Activated naive CD4-positive, alpha-beta T cell treated with anti-CD3 and anti-CD28 coated beads for 36 hours (primary cell): ENCODE measurements at regions of chr6 and their contacts with region 1.

Region 1: DNA sequence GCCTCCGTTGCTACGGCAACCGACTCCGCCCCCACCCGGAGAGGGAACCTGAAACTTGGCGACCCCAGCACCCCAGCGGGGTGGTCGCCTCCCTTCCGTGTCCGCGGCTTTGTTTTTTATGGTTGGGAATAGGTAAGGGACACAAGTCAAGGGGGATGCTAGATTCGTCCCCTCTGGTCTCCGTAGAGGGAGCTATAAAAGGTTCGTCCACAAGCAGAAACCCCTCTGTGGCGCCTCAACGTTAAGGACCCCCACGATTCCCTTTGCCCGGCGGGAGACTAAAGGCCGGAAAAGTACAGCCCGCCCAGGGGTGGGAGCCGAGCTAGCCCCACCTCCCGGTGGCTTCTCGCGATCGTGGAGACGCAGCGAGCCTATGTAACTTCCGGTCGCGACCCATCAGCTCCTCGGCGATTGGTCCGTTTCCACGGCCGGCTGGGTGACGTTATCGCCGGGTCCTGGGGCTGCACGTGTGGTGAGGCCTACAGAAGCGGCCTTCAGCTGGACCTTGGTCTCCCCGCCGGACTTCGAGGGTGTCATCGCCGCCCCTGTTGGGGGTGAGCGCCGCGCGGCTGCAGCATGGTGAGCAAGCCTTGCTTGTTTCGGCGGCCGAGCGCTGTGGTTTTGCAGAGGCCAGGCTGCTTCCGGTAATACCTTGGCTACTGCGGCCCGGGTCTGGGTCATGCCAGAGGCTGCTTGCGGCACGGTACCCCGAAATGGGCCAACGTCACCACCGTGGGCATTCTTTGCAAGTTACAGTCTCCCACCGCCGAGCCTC is at the start of gene LTV1:
- DNase-seq: peak; percentile 96
- H3K4me3 Mint-ChIP-seq: peak within 1 kb of the TSS; percentile 93
- H3K27ac Mint-ChIP-seq: peak within 1 kb of the TSS; percentile 94
- H3K4me1 Mint-ChIP-seq: peaks cover 28% of the 10 kb centered on the region
- H3K27me3 Mint-ChIP-seq: no peaks in the 10 kb centered on the region
- total RNA-seq, gene LTV1: 22.8 to 23.3 TPM

Region 2: GRCh38 chr6:143060354-143060805 is 782.7 kb before region 1 on chr6:
- CTCF ChIA-PET with region 1: no interaction called
- intact Hi-C with region 1: loop called (anchors 5 kb)
- DNase-seq: peak; percentile 77
- H3K4me3 Mint-ChIP-seq: peak overlapping the region; percentile 81
- H3K27ac Mint-ChIP-seq: peak overlapping the region; percentile 90
- H3K4me1 Mint-ChIP-seq: peaks cover 28% of the 10 kb centered on the region
- H3K27me3 Mint-ChIP-seq: no peaks in the 10 kb centered on the region

Region 3: DNA sequence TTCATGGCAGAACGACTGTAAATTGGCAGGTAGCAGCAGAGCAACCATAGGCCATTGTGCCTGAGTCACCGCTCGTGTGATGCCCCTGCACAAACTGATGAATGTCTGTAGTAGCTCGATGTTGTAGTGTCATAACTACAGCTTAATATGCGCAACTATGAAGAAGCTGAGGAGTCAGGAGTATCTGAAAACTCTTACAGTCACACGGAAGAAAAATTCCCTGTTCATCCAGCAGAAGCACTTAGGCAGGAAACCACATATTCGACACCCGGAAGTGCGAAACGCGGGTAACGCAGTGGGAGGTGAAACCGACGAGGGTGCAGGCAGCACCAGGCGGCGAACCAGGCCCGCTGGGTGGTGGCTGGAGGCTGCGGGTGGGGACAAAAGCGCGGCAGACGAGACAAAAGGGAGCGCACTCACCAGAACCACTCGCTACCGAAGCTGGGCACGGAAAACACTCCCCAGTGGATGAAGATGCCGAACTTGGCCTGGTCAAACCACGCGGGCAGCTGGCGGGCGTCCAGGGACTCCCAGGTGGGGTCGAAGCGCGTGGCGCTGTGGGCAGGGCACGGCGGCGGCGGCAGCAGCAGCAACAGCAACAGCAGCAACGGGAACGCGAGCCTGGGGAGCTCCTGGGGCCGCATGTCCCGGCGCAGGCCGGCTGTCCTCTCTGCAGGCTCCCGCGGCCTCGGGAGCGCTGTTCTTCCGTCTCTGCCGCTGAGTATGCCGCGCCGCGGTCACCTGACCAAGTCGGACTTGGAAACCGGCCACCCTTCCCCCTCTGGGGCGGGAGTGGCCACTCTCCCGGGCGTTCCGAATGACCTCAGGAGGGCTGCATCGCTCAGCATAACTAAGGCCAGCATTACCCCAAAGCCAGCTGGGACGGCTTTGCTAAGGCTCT is 331.8 kb before region 1 on chr6 and contains the start of gene FUCA2:
- CTCF ChIA-PET with region 1: interaction called, 3 read pairs
- intact Hi-C with region 1: loop called (anchors 1 kb)
- DNase-seq: peak; percentile 82
- H3K4me3 Mint-ChIP-seq: peak within 1 kb of the TSS; percentile 85
- H3K27ac Mint-ChIP-seq: peak within 1 kb of the TSS; percentile 85
- H3K4me1 Mint-ChIP-seq: peaks cover 15% of the 10 kb centered on the region
- H3K27me3 Mint-ChIP-seq: no peaks in the 10 kb centered on the region
- total RNA-seq, gene FUCA2: 7.7 to 8.2 TPM

Region 4: DNA sequence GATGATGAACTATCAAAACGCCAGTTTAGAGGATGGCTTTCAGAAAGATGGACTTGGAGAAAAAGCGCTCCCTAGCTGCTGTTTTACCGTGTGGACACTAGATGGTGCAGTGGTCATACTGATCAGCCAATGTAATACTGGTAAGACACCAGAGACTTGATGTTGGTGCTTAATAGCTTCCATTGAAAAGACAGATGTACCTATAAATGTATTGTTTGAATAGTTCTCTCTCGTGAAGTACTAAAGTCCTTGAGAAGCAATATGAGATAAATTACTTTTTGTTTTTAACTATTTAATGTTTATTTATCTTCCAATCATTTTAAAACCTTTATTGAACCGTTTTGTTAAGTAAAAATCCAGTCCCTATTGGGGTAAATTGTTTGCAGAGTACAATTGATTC is 267.6 kb before region 1 on chr6:
- CTCF ChIA-PET with region 1: interaction called, 3 read pairs
- intact Hi-C with region 1: loop called (anchors 1 kb)
- DNase-seq: peak; percentile 69
- H3K4me3 Mint-ChIP-seq: no peak overlapping the region
- H3K27ac Mint-ChIP-seq: no peak overlapping the region
- H3K4me1 Mint-ChIP-seq: no peaks in the 10 kb centered on the region
- H3K27me3 Mint-ChIP-seq: no peaks in the 10 kb centered on the region

Region 5: GRCh38 chr6:143806282-143807102 is 36.6 kb before region 1 on chr6:
- CTCF ChIA-PET with region 1: no interaction called
- intact Hi-C with region 1: loop called (anchors 1 kb)
- DNase-seq: peak; percentile 83
- H3K4me3 Mint-ChIP-seq: no peak overlapping the region
- H3K27ac Mint-ChIP-seq: peak overlapping the region; percentile 62
- H3K4me1 Mint-ChIP-seq: peaks cover 39% of the 10 kb centered on the region
- H3K27me3 Mint-ChIP-seq: no peaks in the 10 kb centered on the region